ENCODE measurements at regions of chr11 and their contacts with region 1.

Region 1: GRCh38 chr11:44621140-44621681 is 55.7 kb downstream of the CD82 start:
- DNase-seq: no peak
- ATAC-seq: peak; percentile 66
- H3K4me3 ChIP-seq: no peak overlapping the region
- H3K27ac ChIP-seq: no peak overlapping the region
- H3K4me1 ChIP-seq: no peaks in the 10 kb centered on the region
- H3K27me3 ChIP-seq: no peaks in the 10 kb centered on the region
- CTCF ChIP-seq: peak; percentile 84 to 90 (median 87)
- EP300 ChIP-seq: no peak
- POLR2A ChIP-seq: no peak
- RAD21 ChIP-seq: peak; percentile 71

Region 2: GRCh38 chr11:44286268-44286880 is 334.8 kb before region 1 on chr11:
- CTCF ChIA-PET with region 1: interaction called, 4 read pairs
- POLR2A ChIA-PET with region 1: no interaction called
- RAD21 ChIA-PET with region 1: interaction called, 7 read pairs
- SMC1A ChIA-PET with region 1: no interaction called
- in situ Hi-C with region 1: loop called (anchors 10 kb)
- intact Hi-C with region 1: loop called (anchors 5 kb)
- DNase-seq: peak; percentile 2
- ATAC-seq: peak; percentile 91
- H3K4me3 ChIP-seq: no peak overlapping the region
- H3K27ac ChIP-seq: no peak overlapping the region
- H3K4me1 ChIP-seq: no peaks in the 10 kb centered on the region
- H3K27me3 ChIP-seq: no peaks in the 10 kb centered on the region; a peak in 1 of 4 replicates
- CTCF ChIP-seq: peak; percentile 83 to 99 (median 96); a peak in 5 of 6 replicates
- EP300 ChIP-seq: no peak
- POLR2A ChIP-seq: no peak
- RAD21 ChIP-seq: peak; percentile 96

Region 3: DNA sequence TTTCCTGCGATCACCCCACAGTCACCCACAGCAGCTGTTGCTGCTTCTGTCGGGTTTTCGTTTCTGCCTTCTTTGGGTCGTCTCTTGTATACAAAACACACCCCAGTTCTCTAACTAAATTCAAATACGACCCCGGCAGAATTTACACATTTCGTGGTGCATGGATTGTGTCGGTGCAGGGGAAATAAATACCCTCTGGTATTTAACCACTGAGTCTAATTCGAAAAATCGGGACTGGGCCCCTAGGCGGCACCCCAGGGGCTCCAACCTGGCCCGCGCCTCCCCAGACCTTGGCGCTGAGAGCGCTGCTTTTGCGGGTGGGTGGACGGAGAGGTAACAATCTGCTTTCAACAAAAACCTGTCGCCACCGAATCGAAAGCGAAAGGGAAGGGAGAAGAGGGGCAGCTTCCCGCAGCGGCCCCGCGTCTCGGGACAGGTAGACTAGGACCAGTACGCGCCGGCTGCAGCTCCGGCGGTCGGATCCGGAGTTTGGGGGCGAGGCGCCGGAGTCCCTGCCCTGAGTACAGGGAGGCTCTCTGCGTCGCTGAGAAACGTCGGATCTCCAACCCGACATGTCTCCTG is 315.6 kb before region 1 on chr11:
- CTCF ChIA-PET with region 1: no interaction called
- POLR2A ChIA-PET with region 1: no interaction called
- RAD21 ChIA-PET with region 1: no interaction called
- SMC1A ChIA-PET with region 1: no interaction called
- in situ Hi-C with region 1: no loop called
- intact Hi-C with region 1: no loop called
- DNase-seq: no peak
- ATAC-seq: peak; percentile 68
- H3K4me3 ChIP-seq: peak overlapping the region; percentile 60
- H3K27ac ChIP-seq: no peak overlapping the region
- H3K4me1 ChIP-seq: no peaks in the 10 kb centered on the region
- H3K27me3 ChIP-seq: peaks cover 26 to 32% of the 10 kb centered on the region in 2 experiments
- CTCF ChIP-seq: 0 out of 6 replicates have a peak, but pooled peaks of 1 of the 3 experiments have one; percentile 2
- EP300 ChIP-seq: no peak
- POLR2A ChIP-seq: no peak
- RAD21 ChIP-seq: no peak

Region 4: DNA sequence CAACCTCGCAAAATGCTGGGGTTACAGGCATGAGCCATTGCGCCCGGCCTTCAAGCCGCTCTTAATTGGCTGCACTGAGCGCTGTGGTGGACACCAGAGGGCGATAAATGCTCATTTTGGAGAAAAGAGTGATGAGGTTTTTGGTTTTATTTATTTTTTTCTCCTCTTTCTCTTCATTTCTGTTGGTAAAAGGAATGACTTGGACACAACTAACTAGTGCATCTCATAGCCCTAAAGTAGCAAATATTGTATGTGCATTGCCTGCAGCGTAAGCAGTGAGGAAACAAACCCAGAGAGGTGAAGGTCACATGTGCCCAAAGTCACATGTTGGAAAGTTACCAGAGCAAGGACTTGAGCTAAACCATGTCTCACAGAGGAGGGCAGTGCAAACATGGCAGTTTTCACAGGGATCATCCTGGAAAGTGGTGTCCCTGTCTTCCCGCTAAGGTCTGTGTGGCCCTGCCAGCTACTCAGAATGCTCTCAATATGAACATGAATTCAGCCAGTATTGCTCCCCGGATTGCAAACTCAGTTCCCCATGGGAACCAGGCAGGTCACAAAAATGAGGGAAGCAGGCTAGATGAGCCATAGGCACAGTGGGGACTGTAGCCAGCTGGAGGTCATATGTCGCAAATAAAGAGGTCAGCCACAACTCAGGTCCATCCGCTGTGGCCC is 64.3 kb before region 1 on chr11:
- CTCF ChIA-PET with region 1: interaction called, 477 read pairs
- POLR2A ChIA-PET with region 1: interaction called, 289 read pairs
- RAD21 ChIA-PET with region 1: interaction called, 190 read pairs
- SMC1A ChIA-PET with region 1: interaction called, 433 read pairs
- in situ Hi-C with region 1: no loop called
- intact Hi-C with region 1: loop called (anchors 1 kb)
- DNase-seq: peak; percentile 47
- ATAC-seq: peak; percentile 63
- H3K4me3 ChIP-seq: no peak overlapping the region
- H3K27ac ChIP-seq: no peak overlapping the region
- H3K4me1 ChIP-seq: peaks cover 27% of the 10 kb centered on the region
- H3K27me3 ChIP-seq: no peaks in the 10 kb centered on the region
- CTCF ChIP-seq: peak; percentile 62 to 71 (median 70)
- EP300 ChIP-seq: no peak
- POLR2A ChIP-seq: no peak
- RAD21 ChIP-seq: peak; percentile 93

Region 5: DNA sequence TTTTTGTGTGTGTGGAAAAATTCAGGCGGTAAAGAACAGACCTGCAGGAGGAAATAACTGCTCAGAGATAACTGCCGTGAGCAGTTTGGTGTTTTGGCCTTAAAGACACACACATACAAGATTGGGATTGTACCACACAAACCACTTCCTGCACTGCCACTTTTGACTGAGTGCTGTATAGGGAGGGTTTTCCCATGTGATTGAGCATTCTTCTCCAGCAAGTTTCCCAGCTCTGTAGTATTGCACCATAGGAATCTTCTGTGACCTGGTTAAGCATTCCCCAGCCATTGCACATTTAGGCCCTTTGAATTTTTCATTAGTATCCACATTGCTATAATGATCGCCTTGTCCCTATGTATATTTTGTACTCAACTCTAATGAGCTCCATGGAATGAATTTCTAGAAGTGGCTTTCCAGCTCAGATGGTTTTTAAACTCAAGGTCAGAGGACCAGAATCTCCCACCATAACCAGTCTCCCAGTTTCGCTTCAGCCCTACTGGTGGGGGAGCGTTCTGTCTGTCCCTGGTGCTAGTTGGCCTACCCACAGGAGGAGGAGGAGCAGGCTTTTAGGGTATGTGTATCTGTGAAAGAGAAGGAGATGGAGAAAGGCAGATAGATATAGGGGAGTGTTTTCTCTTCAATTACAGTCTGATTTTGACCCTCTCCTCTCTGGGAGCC is 46.5 kb before region 1 on chr11:
- CTCF ChIA-PET with region 1: interaction called, 12 read pairs
- POLR2A ChIA-PET with region 1: interaction called, 289 read pairs
- RAD21 ChIA-PET with region 1: interaction called, 17 read pairs
- SMC1A ChIA-PET with region 1: interaction called, 7 read pairs
- in situ Hi-C with region 1: no loop called
- intact Hi-C with region 1: no loop called
- DNase-seq: peak; percentile 66
- ATAC-seq: peak; percentile 66
- H3K4me3 ChIP-seq: peak overlapping the region; percentile 38; the same call in 1 of the 2 replicates
- H3K27ac ChIP-seq: peak overlapping the region; percentile 88
- H3K4me1 ChIP-seq: peaks cover 63% of the 10 kb centered on the region
- H3K27me3 ChIP-seq: no peaks in the 10 kb centered on the region
- CTCF ChIP-seq: no peak
- EP300 ChIP-seq: peak; percentile 23 to 37; a peak in 1 of 4 replicates
- POLR2A ChIP-seq: no peak
- RAD21 ChIP-seq: no peak

Region 6: GRCh38 chr11:44634401-44635281 is 13.4 kb after region 1 on chr11:
- CTCF ChIA-PET with region 1: interaction called, 25 read pairs
- POLR2A ChIA-PET with region 1: no interaction called
- RAD21 ChIA-PET with region 1: interaction called, 3 read pairs
- SMC1A ChIA-PET with region 1: interaction called, 5 read pairs
- in situ Hi-C with region 1: no loop called
- intact Hi-C with region 1: no loop called
- DNase-seq: no peak
- ATAC-seq: peak; percentile 37
- H3K4me3 ChIP-seq: no peak overlapping the region
- H3K27ac ChIP-seq: no peak overlapping the region
- H3K4me1 ChIP-seq: no peaks in the 10 kb centered on the region
- H3K27me3 ChIP-seq: no peaks in the 10 kb centered on the region
- CTCF ChIP-seq: no peak
- EP300 ChIP-seq: no peak
- POLR2A ChIP-seq: no peak
- RAD21 ChIP-seq: no peak

Region 7: DNA sequence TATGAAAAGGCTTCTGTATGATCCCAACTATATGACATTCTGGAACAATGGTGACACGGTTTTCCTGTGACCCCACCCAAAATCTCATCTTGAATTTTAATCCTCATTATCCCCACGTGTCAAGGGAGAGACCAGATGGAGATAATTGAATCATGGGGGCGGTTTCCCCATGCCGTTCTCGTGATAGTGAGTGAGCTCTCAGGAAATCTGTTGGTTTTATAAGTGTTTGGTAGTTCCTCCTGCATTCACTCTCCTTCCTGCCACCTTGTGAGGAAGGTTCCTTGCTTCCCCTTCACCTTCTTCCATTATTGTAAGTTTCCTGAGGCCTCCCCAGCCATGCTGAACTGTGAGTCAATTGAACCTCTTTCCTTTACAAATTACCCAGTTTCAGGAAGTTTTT is 52.5 kb after region 1 on chr11:
- CTCF ChIA-PET with region 1: no interaction called
- POLR2A ChIA-PET with region 1: no interaction called
- RAD21 ChIA-PET with region 1: no interaction called
- SMC1A ChIA-PET with region 1: no interaction called
- in situ Hi-C with region 1: no loop called
- intact Hi-C with region 1: no loop called
- DNase-seq: no peak
- ATAC-seq: no peak
- H3K4me3 ChIP-seq: no peak overlapping the region
- H3K27ac ChIP-seq: no peak overlapping the region
- H3K4me1 ChIP-seq: no peaks in the 10 kb centered on the region
- H3K27me3 ChIP-seq: no peaks in the 10 kb centered on the region; a peak in 1 of 4 replicates
- CTCF ChIP-seq: no peak
- EP300 ChIP-seq: no peak
- POLR2A ChIP-seq: no peak
- RAD21 ChIP-seq: no peak

Region 8: GRCh38 chr11:44893846-44894617 is 272.8 kb after region 1 on chr11:
- CTCF ChIA-PET with region 1: interaction called, 3 read pairs
- POLR2A ChIA-PET with region 1: no interaction called
- RAD21 ChIA-PET with region 1: no interaction called
- SMC1A ChIA-PET with region 1: no interaction called
- in situ Hi-C with region 1: no loop called
- intact Hi-C with region 1: loop called (anchors 1 kb)
- DNase-seq: no peak
- ATAC-seq: peak; percentile 98
- H3K4me3 ChIP-seq: no peak overlapping the region
- H3K27ac ChIP-seq: no peak overlapping the region
- H3K4me1 ChIP-seq: no peaks in the 10 kb centered on the region
- H3K27me3 ChIP-seq: no peaks in the 10 kb centered on the region; a peak in 2 of 4 replicates
- CTCF ChIP-seq: peak; percentile 81 to 86 (median 83)
- EP300 ChIP-seq: no peak
- POLR2A ChIP-seq: no peak
- RAD21 ChIP-seq: peak; percentile 81